ENCODE measurements at regions of chr1 and their contacts with region 1.

Region 1: GRCh38 chr1:65459397-65459768 is 38.9 kb downstream of the LEPR start:
- DNase-seq: no peak
- H3K4me3 Mint-ChIP-seq: no peak overlapping the region
- H3K27ac Mint-ChIP-seq: no peak overlapping the region
- H3K4me1 Mint-ChIP-seq: peaks cover 12% of the 10 kb centered on the region
- H3K27me3 Mint-ChIP-seq: peaks cover 3% of the 10 kb centered on the region

Region 2: GRCh38 chr1:65235867-65236805 is 223.2 kb before region 1 on chr1:
- intact Hi-C with region 1: loop called (anchors 1 kb)
- DNase-seq: no peak
- H3K4me3 Mint-ChIP-seq: no peak overlapping the region
- H3K27ac Mint-ChIP-seq: no peak overlapping the region
- H3K4me1 Mint-ChIP-seq: peaks cover 17% of the 10 kb centered on the region
- H3K27me3 Mint-ChIP-seq: peaks cover 17% of the 10 kb centered on the region

Region 3: DNA sequence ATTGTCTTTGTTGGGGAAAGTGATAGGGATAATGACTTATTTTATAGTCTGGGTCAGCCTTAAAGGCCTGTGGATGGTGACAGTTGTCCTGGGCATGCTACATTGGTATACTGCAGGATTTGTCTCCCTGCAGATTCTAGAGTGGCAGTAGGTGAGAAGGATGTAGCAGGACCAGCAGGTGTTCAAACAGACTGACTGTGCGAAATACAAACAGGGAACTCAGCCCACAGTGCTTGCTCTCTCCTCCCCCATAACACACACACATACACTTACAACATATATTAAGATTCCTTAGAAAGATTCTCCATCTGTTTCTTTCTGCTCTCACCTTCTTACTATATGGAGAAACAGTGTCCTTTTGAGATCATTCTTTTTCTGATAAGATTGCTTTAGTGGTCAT is 340.2 kb after region 1 on chr1:
- intact Hi-C with region 1: no loop called
- DNase-seq: no peak
- H3K4me3 Mint-ChIP-seq: no peak overlapping the region
- H3K27ac Mint-ChIP-seq: no peak overlapping the region
- H3K4me1 Mint-ChIP-seq: peaks cover 2% of the 10 kb centered on the region
- H3K27me3 Mint-ChIP-seq: peaks cover 44% of the 10 kb centered on the region